ENCODE measurements at regions of chr20 and their contacts with region 1.

Region 1: GRCh38 chr20:2523919-2524708 is 12.3 kb upstream of the TMC2 start:
- DNase-seq: peak; percentile 94
- ATAC-seq: peak; percentile 88

Region 2: GRCh38 chr20:1934721-1935573 is 589.2 kb before region 1 on chr20:
- intact Hi-C with region 1: no loop called
- DNase-seq: peak; percentile 75
- ATAC-seq: peak; percentile 84

Region 3: DNA sequence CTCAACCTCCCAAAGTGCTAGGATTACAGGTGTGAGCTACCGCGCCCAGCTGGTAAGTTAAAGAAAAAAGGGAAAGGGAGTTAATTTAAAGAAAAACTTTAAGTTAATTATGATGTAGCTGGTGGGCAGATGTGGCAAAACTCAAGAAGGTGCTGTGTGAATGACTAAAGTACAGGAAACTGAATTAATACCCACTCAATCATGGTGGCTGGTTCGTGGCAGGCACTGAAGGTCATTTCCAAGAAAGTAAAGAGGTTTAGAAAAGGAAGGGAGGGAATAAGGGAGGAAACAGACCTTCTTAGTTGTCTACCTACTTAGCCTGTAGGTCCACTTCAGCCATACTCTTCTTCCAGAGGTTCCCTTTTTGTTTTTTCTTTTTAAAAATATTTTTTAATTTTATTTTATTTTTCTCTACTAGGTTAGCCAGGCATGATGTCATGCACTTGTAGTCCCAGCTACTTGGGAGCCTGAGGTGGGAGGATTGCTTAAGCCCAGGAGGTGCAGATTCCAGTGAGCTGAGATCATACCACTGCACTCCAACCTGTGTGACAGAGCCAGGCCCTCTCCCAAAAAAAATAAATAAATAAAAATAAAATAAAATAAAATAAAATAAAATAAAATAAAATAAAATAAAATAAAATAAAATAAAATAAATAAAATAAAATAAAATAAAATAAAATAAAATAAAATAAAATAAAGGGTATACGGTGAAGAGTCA is 240.2 kb before region 1 on chr20:
- intact Hi-C with region 1: no loop called
- DNase-seq: no peak
- ATAC-seq: no peak

Region 4: DNA sequence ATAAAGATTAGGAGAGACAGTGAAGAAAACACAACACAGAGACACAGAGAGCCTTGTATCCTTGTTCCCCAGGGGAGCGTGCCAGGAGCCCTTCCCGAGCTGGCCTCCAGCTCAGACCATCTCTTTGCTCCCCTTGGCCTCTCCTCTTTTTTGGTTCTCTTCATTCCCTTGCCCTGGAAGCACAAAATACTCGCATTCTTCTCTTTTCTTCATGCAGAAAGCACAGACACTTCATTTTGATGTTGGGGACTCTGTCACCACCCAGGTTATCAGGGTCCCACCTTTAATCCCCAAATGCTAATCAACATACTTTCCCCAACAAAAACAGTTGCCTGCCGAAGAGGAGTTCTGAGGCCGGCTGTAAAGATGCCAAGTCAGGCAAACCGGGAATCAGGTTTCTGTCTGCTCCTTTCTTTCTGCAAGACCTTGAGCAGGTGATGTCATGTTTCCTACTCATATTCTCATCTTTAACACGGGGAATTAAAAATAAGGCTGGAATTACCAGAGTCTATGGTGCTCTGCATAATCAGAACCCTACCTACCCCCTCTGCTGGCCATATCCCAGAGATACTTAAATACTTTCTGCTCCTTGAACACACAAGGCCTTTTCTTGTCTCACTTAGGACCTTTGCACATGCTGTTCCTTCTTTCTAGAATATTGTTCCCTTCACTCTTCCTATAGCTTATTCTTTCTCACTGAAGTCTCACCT is 121.7 kb before region 1 on chr20:
- intact Hi-C with region 1: no loop called
- DNase-seq: no peak
- ATAC-seq: no peak

Region 5: GRCh38 chr20:2651772-2652723 is 127.9 kb after region 1 on chr20 and contains the start of gene NOP56:
- intact Hi-C with region 1: loop called (anchors 10 kb)
- DNase-seq: peak; percentile 94
- ATAC-seq: peak; percentile 97
- total RNA-seq, gene NOP56: 97.4 TPM

Region 6: GRCh38 chr20:2771631-2772080 is 247.5 kb after region 1 on chr20:
- intact Hi-C with region 1: no loop called
- DNase-seq: no peak
- ATAC-seq: no peak